WTC11 (cell line): ENCODE measurements at regions of chr7 and their contacts with region 1.

Region 1: DNA sequence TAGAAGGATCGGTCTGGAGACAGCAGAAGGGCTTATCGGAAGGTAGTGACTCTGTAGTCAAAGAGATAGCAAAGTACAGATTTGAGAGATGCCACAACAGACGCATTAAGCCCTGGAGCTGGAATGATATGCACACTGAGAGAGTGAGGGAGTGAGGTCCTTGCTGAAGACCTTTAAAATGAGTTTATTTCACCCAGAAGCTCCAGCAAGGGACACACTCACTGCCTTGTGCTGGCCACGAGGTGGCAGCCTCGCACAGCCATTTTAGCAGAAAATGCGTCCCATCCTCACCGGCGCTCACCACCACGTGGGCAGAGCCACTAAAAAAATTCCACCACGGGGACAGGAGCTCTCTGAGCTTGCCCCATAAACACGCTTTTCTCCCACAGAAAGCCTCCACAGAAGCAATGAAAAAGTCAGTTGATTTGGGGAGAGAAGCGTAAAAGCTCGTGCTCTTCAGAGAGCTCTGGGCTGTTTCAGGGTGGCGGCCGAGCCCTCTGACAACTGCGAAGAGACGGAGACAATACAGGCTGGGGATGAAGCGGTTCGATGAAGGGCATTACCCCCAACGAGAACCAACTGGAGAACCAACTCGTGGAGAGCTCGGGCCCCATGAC is 163.0 kb upstream of the KLF14 start:
- DNase-seq: peak; percentile 75
- ATAC-seq: peak; percentile 76
- H3K4me3 Mint-ChIP-seq: no peak overlapping the region
- H3K27ac Mint-ChIP-seq: peak overlapping the region; percentile 81
- H3K4me1 Mint-ChIP-seq: peaks cover 56% of the 10 kb centered on the region
- H3K27me3 Mint-ChIP-seq: no peaks in the 10 kb centered on the region
- CTCF ChIP-seq: peak; percentile 70

Region 2: GRCh38 chr7:130668257-130669084 is 228.5 kb before region 1 on chr7 and contains the start of gene COPG2:
- CTCF ChIA-PET with region 1: no interaction called
- POLR2A ChIA-PET with region 1: no interaction called
- DNase-seq: peak; percentile 87
- ATAC-seq: peak; percentile 97
- H3K4me3 Mint-ChIP-seq: peak within 1 kb of the TSS; percentile 92
- H3K27ac Mint-ChIP-seq: peak within 1 kb of the TSS; percentile 70; the same call in 1 of the 2 replicates
- H3K4me1 Mint-ChIP-seq: peaks cover 17% of the 10 kb centered on the region
- H3K27me3 Mint-ChIP-seq: peaks cover 20% of the 10 kb centered on the region
- CTCF ChIP-seq: no peak
- total RNA-seq, gene COPG2: 50.9 to 68.4 TPM (median 64.9 TPM) in 3 replicates

Region 3: GRCh38 chr7:130752424-130752823 is 144.6 kb before region 1 on chr7:
- CTCF ChIA-PET with region 1: no interaction called
- POLR2A ChIA-PET with region 1: no interaction called
- DNase-seq: no peak
- ATAC-seq: no peak
- H3K4me3 Mint-ChIP-seq: no peak overlapping the region
- H3K27ac Mint-ChIP-seq: no peak overlapping the region
- H3K4me1 Mint-ChIP-seq: no peaks in the 10 kb centered on the region
- H3K27me3 Mint-ChIP-seq: no peaks in the 10 kb centered on the region
- CTCF ChIP-seq: no peak

Region 4: GRCh38 chr7:130845581-130846085 is 51.4 kb before region 1 on chr7:
- CTCF ChIA-PET with region 1: no interaction called
- POLR2A ChIA-PET with region 1: no interaction called
- DNase-seq: no peak
- ATAC-seq: no peak
- H3K4me3 Mint-ChIP-seq: no peak overlapping the region
- H3K27ac Mint-ChIP-seq: no peak overlapping the region
- H3K4me1 Mint-ChIP-seq: no peaks in the 10 kb centered on the region
- H3K27me3 Mint-ChIP-seq: no peaks in the 10 kb centered on the region; the same call in 1 of the 2 replicates
- CTCF ChIP-seq: no peak

Region 5: DNA sequence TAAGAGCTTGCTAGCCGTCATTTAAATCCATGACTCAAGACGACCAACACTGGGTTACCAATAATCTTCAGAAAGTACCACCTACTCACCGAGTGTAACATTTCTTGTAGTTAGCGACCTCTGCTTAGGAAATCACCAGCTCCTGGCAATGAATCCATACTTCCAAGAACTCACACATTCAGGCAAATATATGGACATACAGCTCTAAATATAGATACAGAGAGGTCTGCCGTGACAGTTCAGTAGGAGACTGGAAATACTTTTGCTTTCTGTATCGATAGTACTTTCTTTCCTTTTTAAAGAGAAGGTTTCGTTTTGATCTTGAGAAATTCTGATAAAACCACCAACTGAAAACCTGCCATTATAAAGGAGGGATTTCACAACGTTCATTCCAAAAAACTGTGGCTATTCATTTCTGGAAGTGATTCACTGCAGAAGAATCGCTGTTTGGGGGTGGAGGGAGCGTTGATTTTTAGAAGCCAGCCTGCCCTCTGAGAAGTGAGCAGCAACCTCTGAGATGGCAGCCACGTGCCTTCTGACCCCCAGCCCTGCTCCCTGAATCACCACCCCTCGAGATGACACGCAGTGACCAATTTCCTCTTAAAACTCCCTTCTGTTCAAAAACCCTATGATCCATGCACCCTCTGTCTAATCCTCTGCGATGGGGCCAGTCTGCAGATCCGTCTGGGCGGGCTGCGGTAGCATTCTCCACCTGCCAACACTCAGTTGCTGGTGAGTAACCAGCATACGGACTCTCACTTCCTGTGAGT is 16.0 kb after region 1 on chr7:
- CTCF ChIA-PET with region 1: interaction called, 54 read pairs
- POLR2A ChIA-PET with region 1: no interaction called
- DNase-seq: no peak
- ATAC-seq: peak; percentile 5; the same call in 1 of the 2 replicates
- H3K4me3 Mint-ChIP-seq: no peak overlapping the region
- H3K27ac Mint-ChIP-seq: peak overlapping the region; percentile 67
- H3K4me1 Mint-ChIP-seq: peaks cover 74% of the 10 kb centered on the region
- H3K27me3 Mint-ChIP-seq: no peaks in the 10 kb centered on the region
- CTCF ChIP-seq: no peak

Region 6: DNA sequence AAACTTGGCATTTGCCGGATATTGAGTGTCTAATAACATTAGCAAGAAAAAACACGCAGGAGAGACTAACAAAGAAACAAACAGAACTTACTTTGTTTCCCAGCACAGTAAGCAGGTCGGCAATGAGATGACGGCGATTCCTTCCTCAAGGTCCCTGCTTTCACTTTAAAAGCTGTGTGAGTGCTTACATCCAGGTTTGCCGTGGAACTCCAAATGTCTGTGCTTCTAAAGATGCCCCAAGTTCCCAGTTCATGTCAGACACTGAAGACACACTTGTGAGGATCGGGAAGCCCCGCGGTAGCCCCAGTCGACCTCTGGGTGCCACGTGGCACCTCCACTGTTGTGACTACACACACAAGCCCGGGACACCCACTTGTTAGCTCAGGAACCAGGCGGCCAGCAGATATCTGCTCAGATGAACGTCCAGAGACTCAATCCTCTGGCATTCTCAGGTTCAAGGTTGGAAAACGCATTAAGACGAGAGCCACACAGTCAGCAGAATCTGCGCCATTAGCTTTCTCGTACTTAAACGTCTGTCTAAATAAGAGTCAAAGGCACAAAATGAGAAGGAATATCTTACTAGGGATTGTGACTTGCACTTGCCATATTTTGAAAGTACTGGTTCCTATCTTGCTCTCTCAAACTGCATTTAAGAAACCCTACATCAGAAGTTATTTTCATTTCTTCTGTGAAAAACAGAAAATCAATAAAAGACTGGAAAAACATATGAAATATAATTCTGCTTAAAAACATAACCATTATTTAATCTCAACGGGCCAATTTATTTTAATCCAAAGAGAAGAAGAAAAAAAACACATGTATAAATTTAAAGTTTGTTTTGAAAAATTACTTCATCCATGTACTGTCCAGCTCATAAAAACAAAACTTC is 44.6 kb after region 1 on chr7:
- CTCF ChIA-PET with region 1: interaction called, 22 read pairs
- POLR2A ChIA-PET with region 1: no interaction called
- DNase-seq: no peak
- ATAC-seq: peak; percentile 36; the same call in 1 of the 2 replicates
- H3K4me3 Mint-ChIP-seq: no peak overlapping the region
- H3K27ac Mint-ChIP-seq: peak overlapping the region; percentile 84
- H3K4me1 Mint-ChIP-seq: peaks cover 45% of the 10 kb centered on the region
- H3K27me3 Mint-ChIP-seq: no peaks in the 10 kb centered on the region
- CTCF ChIP-seq: no peak

Region 7: GRCh38 chr7:130982160-130982638 is 85.2 kb after region 1 on chr7:
- CTCF ChIA-PET with region 1: interaction called, 35 read pairs
- POLR2A ChIA-PET with region 1: no interaction called
- DNase-seq: no peak
- ATAC-seq: peak; percentile 93
- H3K4me3 Mint-ChIP-seq: no peak overlapping the region
- H3K27ac Mint-ChIP-seq: no peak overlapping the region
- H3K4me1 Mint-ChIP-seq: peaks cover 4% of the 10 kb centered on the region; the same call in 1 of the 2 replicates
- H3K27me3 Mint-ChIP-seq: no peaks in the 10 kb centered on the region
- CTCF ChIP-seq: no peak

Region 8: GRCh38 chr7:131007394-131008330 is 110.7 kb after region 1 on chr7:
- CTCF ChIA-PET with region 1: interaction called, 40 read pairs
- POLR2A ChIA-PET with region 1: no interaction called
- DNase-seq: peak; percentile 54
- ATAC-seq: peak; percentile 88
- H3K4me3 Mint-ChIP-seq: no peak overlapping the region
- H3K27ac Mint-ChIP-seq: peak overlapping the region; percentile 90
- H3K4me1 Mint-ChIP-seq: peaks cover 20% of the 10 kb centered on the region
- H3K27me3 Mint-ChIP-seq: no peaks in the 10 kb centered on the region
- CTCF ChIP-seq: no peak

Region 9: GRCh38 chr7:131068604-131069021 is 171.6 kb after region 1 on chr7:
- CTCF ChIA-PET with region 1: interaction called, 25 read pairs
- POLR2A ChIA-PET with region 1: no interaction called
- DNase-seq: no peak
- ATAC-seq: no peak
- H3K4me3 Mint-ChIP-seq: no peak overlapping the region
- H3K27ac Mint-ChIP-seq: no peak overlapping the region
- H3K4me1 Mint-ChIP-seq: peaks cover 36% of the 10 kb centered on the region
- H3K27me3 Mint-ChIP-seq: no peaks in the 10 kb centered on the region
- CTCF ChIP-seq: no peak

Region 10: GRCh38 chr7:131321646-131322045 is 424.6 kb after region 1 on chr7:
- CTCF ChIA-PET with region 1: no interaction called
- POLR2A ChIA-PET with region 1: no interaction called
- DNase-seq: no peak
- ATAC-seq: no peak
- H3K4me3 Mint-ChIP-seq: no peak overlapping the region
- H3K27ac Mint-ChIP-seq: no peak overlapping the region
- H3K4me1 Mint-ChIP-seq: peaks cover 23% of the 10 kb centered on the region
- H3K27me3 Mint-ChIP-seq: no peaks in the 10 kb centered on the region
- CTCF ChIP-seq: no peak